Activated CD8-positive, alpha-beta memory T cell treated with anti-CD3 and anti-CD28 coated beads, Interleukin-2, amount 10 ng/mL, durations not matched to agents 7 days and 5 days (primary cell): ENCODE measurements at regions of chr16 and their contacts with region 1.

Region 1: GRCh38 chr16:68328151-68328859 is 17.5 kb downstream of the PRMT7 start:
- DNase-seq: peak; percentile 86
- ATAC-seq: peak; percentile 97
- H3K4me3 Mint-ChIP-seq: no peak overlapping the region
- H3K27ac Mint-ChIP-seq: no peak overlapping the region
- H3K4me1 Mint-ChIP-seq: peaks cover 26% of the 10 kb centered on the region
- H3K27me3 Mint-ChIP-seq: no peaks in the 10 kb centered on the region

Region 2: DNA sequence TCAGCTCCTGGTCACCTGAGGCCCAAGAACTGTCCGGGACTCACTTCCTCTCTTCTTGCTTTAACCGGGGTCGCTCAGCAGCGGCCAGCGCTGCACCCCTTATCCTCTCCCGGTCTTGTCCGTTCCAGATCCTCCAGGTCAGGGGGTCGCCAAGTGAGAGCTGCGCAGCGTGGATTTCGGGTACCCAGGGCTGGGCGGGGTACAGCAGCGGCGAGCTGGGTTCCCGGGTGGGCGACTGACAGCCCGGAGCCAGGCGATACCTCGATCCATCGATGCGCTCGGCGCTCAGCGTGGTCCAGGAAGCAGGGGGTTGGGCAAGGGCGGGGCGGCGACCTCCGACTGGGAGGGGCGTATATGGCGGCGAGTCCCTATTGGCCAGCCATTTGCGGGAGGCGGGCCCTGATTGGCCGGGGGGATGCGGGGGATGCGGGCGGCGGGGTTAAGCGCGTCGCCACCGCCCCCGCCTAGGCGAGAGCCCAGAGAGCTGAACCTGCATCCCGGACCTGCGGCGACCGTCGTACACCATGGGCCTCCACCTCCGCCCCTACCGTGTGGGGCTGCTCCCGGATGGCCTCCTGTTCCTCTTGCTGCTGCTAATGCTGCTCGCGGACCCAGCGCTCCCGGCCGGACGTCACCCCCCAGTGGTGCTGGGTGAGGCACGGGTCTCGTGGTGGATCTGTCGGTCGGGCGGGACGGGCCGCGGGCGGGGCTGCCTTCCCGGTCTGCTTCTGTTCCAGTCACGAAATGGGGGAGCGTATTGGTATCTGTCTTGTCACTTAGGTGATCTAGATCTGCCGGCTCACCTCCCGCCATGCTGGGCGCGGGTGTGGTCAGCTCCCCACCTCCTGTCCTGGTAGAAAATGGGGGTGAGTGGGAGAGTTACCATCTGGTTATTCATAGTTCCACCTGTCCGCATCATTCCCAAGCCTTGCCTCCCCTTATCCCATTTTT is 83.1 kb before region 1 on chr16 and contains the start of gene PLA2G15:
- CTCF ChIA-PET with region 1: interaction called, 35 read pairs
- DNase-seq: peak; percentile 97
- ATAC-seq: peak; percentile 97
- H3K4me3 Mint-ChIP-seq: peak within 1 kb of the TSS; percentile 96
- H3K27ac Mint-ChIP-seq: peak within 1 kb of the TSS; percentile 85
- H3K4me1 Mint-ChIP-seq: peaks cover 21% of the 10 kb centered on the region
- H3K27me3 Mint-ChIP-seq: no peaks in the 10 kb centered on the region
- total RNA-seq, gene PLA2G15: 8.4 to 9.3 TPM

Region 3: GRCh38 chr16:68289621-68290329 is 38.5 kb before region 1 on chr16:
- CTCF ChIA-PET with region 1: interaction called, 10 read pairs
- DNase-seq: peak; percentile 79
- ATAC-seq: peak; percentile 76
- H3K4me3 Mint-ChIP-seq: peak overlapping the region; percentile 4
- H3K27ac Mint-ChIP-seq: peak overlapping the region; percentile 84
- H3K4me1 Mint-ChIP-seq: peaks cover 68% of the 10 kb centered on the region
- H3K27me3 Mint-ChIP-seq: no peaks in the 10 kb centered on the region

Region 4: GRCh38 chr16:68338326-68339119 is 10.2 kb after region 1 on chr16:
- CTCF ChIA-PET with region 1: interaction called, 27 read pairs
- DNase-seq: no peak
- ATAC-seq: no peak
- H3K4me3 Mint-ChIP-seq: no peak overlapping the region
- H3K27ac Mint-ChIP-seq: no peak overlapping the region
- H3K4me1 Mint-ChIP-seq: peaks cover 2% of the 10 kb centered on the region
- H3K27me3 Mint-ChIP-seq: no peaks in the 10 kb centered on the region

Region 5: DNA sequence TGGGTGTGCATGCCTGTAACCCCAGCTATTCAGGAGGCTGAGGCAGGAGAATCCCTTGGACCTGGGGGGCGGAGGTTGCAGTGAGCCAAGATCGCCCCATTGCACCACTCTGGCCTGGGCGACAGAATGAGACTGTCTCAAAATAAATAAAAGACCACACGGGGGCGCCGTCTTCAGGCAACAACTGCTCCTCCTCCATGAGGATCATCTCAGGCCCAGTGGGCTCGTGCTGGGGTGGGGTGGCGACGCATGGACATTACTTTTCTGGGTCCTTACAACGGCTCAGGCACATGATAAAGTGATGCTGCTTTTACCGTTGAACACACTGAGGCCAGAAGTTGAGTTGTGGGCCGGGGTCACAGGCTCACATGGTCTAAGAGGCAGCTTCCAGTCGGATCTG is 38.7 kb after region 1 on chr16:
- CTCF ChIA-PET with region 1: interaction called, 10 read pairs
- DNase-seq: peak; percentile 66
- ATAC-seq: peak; percentile 41
- H3K4me3 Mint-ChIP-seq: no peak overlapping the region
- H3K27ac Mint-ChIP-seq: no peak overlapping the region
- H3K4me1 Mint-ChIP-seq: peaks cover 42% of the 10 kb centered on the region
- H3K27me3 Mint-ChIP-seq: peaks cover 23% of the 10 kb centered on the region

Region 6: GRCh38 chr16:68417711-68418301 is 89.5 kb after region 1 on chr16:
- CTCF ChIA-PET with region 1: no interaction called
- DNase-seq: peak; percentile 89
- ATAC-seq: peak; percentile 91
- H3K4me3 Mint-ChIP-seq: peak overlapping the region; percentile 62
- H3K27ac Mint-ChIP-seq: peak overlapping the region; percentile 88
- H3K4me1 Mint-ChIP-seq: peaks cover 24% of the 10 kb centered on the region
- H3K27me3 Mint-ChIP-seq: no peaks in the 10 kb centered on the region

Region 7: DNA sequence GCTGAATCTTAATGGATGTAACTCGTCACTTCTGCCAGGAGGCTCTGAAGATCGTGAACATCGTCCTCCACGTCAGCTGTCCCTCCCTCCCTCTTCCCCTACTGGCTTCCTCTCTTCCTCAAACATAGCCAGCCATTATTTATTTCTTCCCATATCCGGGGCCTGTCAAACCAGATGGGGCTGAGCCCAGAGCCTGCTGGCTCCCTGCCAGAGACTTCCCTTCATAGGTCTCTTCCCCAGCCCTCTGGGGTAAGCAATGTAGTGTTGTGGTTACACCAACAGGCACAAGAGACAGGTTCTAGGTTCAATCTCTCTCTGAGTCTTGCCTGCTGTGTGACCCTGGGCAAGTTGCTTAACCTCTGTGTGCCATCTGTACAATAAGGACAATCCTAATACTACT is 170.7 kb after region 1 on chr16:
- CTCF ChIA-PET with region 1: no interaction called
- DNase-seq: no peak
- ATAC-seq: no peak
- H3K4me3 Mint-ChIP-seq: no peak overlapping the region
- H3K27ac Mint-ChIP-seq: no peak overlapping the region
- H3K4me1 Mint-ChIP-seq: no peaks in the 10 kb centered on the region
- H3K27me3 Mint-ChIP-seq: peaks cover 17% of the 10 kb centered on the region